Activated B cell treated with CpG ODN at 0.5 μM for 24 hours (primary cell): ENCODE measurements at regions of chr13 and their contacts with region 1.

Region 1: GRCh38 chr13:26985285-26985878 is 186.2 kb downstream of the USP12 start:
- DNase-seq: no peak
- ATAC-seq: peak; percentile 96
- H3K4me3 Mint-ChIP-seq: no peak overlapping the region
- H3K27ac Mint-ChIP-seq: no peak overlapping the region
- H3K4me1 Mint-ChIP-seq: peaks cover 5% of the 10 kb centered on the region
- H3K27me3 Mint-ChIP-seq: peaks cover 6% of the 10 kb centered on the region
- CTCF ChIP-seq: no peak

Region 2: DNA sequence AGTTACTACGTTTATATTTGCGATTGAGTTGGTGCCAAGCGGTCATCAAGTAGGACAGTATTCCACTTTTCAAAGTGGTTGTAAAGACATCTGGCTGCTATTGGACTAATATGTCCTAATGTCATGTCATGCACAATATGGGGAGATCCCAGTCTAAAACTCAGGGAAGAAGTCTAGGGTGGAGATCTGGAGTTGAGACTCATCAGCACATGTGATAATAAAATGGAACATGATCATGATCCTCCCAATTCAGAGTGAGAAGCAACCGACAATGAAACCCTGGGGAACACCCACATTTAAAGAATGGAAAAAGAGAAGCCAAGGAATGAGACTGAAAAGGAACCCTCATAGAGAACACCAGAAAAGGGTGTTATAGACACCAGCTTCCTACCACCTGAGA is 106.1 kb after region 1 on chr13:
- CTCF ChIA-PET with region 1: no interaction called
- POLR2A ChIA-PET with region 1: no interaction called
- intact Hi-C with region 1: no loop called
- DNase-seq: no peak
- ATAC-seq: no peak
- H3K4me3 Mint-ChIP-seq: no peak overlapping the region
- H3K27ac Mint-ChIP-seq: no peak overlapping the region
- H3K4me1 Mint-ChIP-seq: no peaks in the 10 kb centered on the region
- H3K27me3 Mint-ChIP-seq: no peaks in the 10 kb centered on the region
- CTCF ChIP-seq: no peak

Region 3: DNA sequence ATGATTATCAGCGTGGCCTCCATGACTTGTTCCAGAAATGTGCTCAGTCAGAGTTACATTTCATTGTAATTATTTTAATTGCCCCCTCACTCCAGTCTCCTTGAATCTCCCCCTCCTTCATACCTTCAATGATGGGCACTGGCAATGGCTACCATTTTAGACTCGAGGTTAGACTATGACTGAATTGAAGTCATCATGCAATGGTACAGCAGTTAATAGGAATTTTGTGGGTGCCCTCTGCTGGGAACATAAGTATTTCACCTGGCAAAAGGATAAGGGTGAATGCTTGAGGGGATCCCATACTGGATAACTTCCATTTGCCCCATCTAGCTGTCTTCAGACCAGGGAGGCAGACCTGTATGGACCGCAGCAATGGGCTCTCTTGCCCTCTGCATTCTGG is 218.5 kb after region 1 on chr13:
- CTCF ChIA-PET with region 1: interaction called, 7 read pairs
- POLR2A ChIA-PET with region 1: no interaction called
- intact Hi-C with region 1: loop called (anchors 1 kb)
- DNase-seq: no peak
- ATAC-seq: no peak
- H3K4me3 Mint-ChIP-seq: no peak overlapping the region
- H3K27ac Mint-ChIP-seq: no peak overlapping the region
- H3K4me1 Mint-ChIP-seq: no peaks in the 10 kb centered on the region
- H3K27me3 Mint-ChIP-seq: no peaks in the 10 kb centered on the region
- CTCF ChIP-seq: no peak

Region 4: DNA sequence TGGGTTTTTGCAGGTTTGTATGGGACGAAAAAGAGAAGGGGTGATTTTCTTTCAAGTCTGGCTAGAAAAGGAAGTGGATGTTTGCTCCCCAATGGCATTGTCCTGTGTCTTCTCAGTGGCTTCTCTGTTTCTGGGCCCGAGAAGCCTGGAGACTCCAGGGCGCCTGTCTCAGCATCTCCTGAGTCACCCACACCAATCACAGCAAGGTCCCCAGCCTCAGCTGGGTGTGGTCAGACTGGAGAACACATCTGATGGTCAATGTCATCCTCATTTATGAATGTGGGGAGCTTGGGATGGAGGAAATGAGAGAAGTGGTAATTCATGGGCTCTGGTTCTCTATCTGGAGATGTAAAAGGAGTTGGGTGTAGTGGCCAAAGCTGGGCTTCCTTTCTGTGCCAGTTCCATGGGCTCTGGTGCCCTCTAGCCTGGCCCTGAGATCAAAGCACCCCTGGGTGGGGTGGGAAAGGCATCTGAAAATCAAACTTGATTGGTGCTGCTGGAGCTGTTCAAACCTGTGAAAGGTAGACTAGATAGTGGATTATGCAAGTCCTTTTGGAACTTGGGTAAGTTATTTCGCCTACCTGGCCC is 298.6 kb after region 1 on chr13:
- CTCF ChIA-PET with region 1: interaction called, 36 read pairs
- POLR2A ChIA-PET with region 1: interaction called, 5 read pairs
- intact Hi-C with region 1: loop called (anchors 1 kb)
- DNase-seq: no peak
- ATAC-seq: peak; percentile 65
- H3K4me3 Mint-ChIP-seq: no peak overlapping the region
- H3K27ac Mint-ChIP-seq: no peak overlapping the region
- H3K4me1 Mint-ChIP-seq: peaks cover 7% of the 10 kb centered on the region
- H3K27me3 Mint-ChIP-seq: peaks cover 2% of the 10 kb centered on the region
- CTCF ChIP-seq: no peak

Region 5: GRCh38 chr13:27353166-27353583 is 367.8 kb after region 1 on chr13:
- CTCF ChIA-PET with region 1: interaction called, 185 read pairs
- POLR2A ChIA-PET with region 1: no interaction called
- intact Hi-C with region 1: no loop called
- DNase-seq: no peak
- ATAC-seq: peak; percentile 96
- H3K4me3 Mint-ChIP-seq: peak overlapping the region; percentile 61
- H3K27ac Mint-ChIP-seq: peak overlapping the region; percentile 79
- H3K4me1 Mint-ChIP-seq: peaks cover 19% of the 10 kb centered on the region
- H3K27me3 Mint-ChIP-seq: no peaks in the 10 kb centered on the region
- CTCF ChIP-seq: no peak

Region 6: DNA sequence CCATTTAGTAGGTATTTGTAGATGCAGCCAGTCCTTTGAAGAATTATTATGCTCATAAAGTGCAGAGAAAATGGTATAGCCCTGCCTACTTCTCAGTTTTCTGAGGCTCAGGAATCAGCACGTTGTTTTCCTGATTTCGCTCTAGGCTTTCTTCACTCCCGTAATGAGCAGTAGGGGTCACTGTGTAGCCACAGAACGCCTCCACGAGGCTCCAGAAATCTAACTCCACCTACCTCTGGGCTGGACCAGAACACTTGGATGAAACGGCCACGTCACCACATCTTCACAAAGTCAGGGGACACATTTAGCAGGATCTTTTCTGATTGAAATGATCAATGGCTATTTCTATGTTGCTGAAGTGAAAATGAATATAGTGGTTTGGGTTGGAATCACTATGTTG is 389.3 kb after region 1 on chr13:
- CTCF ChIA-PET with region 1: interaction called, 16 read pairs
- POLR2A ChIA-PET with region 1: no interaction called
- intact Hi-C with region 1: no loop called
- DNase-seq: no peak
- ATAC-seq: peak; percentile 88
- H3K4me3 Mint-ChIP-seq: no peak overlapping the region
- H3K27ac Mint-ChIP-seq: no peak overlapping the region
- H3K4me1 Mint-ChIP-seq: peaks cover 2% of the 10 kb centered on the region
- H3K27me3 Mint-ChIP-seq: peaks cover 22% of the 10 kb centered on the region
- CTCF ChIP-seq: peak; percentile 75